Activated CD8-positive, alpha-beta memory T cell treated with anti-CD3 and anti-CD28 coated beads, Interleukin-2, amount 10 ng/mL, durations not matched to agents 7 days and 5 days (primary cell): ENCODE measurements at regions of chr6 and their contacts with region 1.

Region 1: GRCh38 chr6:106512048-106512967 is 117.0 kb downstream of the RTN4IP1 start:
- DNase-seq: peak; percentile 89
- ATAC-seq: peak; percentile 70
- H3K4me3 Mint-ChIP-seq: peak overlapping the region; percentile 94
- H3K27ac Mint-ChIP-seq: peak overlapping the region; percentile 96
- H3K4me1 Mint-ChIP-seq: peaks cover 50% of the 10 kb centered on the region
- H3K27me3 Mint-ChIP-seq: no peaks in the 10 kb centered on the region

Region 2: GRCh38 chr6:106534564-106534982 is 22.3 kb after region 1 on chr6:
- CTCF ChIA-PET with region 1: interaction called, 18 read pairs
- DNase-seq: no peak
- ATAC-seq: peak; percentile 67
- H3K4me3 Mint-ChIP-seq: no peak overlapping the region
- H3K27ac Mint-ChIP-seq: peak overlapping the region; percentile 79
- H3K4me1 Mint-ChIP-seq: peaks cover 70% of the 10 kb centered on the region
- H3K27me3 Mint-ChIP-seq: no peaks in the 10 kb centered on the region